HCT116 (cell line): ENCODE measurements at regions of chr10 and their contacts with region 1.

Region 1: DNA sequence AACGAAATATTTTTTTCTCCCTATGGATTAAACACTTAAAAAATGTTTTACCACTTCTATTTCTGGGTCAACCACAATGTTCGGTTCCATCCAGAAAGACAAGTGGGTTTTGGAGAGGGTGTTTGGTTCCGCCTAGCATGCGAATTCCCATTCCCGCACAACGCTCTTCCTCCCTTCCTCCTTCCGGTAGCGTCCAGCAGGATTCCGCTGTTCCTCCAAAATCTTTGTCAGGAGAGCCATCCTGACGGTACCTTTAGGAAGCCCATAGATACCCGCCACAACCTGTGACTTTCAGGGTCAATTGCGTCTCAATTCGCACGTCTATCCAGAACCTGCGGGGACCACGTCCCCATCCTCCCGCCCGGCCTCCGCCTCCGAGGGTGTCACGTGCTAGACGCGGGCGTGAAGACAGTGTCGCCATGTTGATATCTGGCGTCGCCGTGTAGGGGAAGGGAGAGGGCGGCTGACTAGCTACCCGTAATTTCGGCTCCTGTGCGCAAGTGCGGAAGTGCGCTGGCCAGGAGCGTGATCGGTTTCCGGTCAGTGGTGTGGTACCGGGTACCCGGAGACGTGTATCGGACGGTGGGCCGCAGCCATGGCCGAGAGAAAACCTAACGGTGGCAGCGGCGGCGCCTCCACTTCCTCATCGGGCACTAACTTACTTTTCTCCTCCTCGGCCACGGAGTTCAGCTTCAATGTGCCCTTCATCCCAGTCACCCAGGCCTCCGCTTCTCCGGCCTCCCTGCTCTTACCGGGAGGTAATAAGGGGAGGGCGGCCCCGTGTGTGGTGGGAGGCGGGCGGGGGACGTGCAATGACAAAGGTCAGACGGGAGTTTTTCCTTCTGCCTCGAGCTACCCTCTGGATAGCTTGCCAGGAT is at the start of gene SEC23IP:
- DNase-seq: peak; percentile 98
- ATAC-seq: peak; percentile 95
- H3K4me3 ChIP-seq: peak within 1 kb of the TSS; percentile 83 to 94
- H3K27ac ChIP-seq: peak within 1 kb of the TSS; percentile 54
- H3K4me1 ChIP-seq: peaks cover 7 to 18% of the 10 kb centered on the region in 2 experiments; a peak in 3 of 4 replicates
- H3K27me3 ChIP-seq: no peaks in the 10 kb centered on the region
- CTCF ChIP-seq: no peak
- POLR2A ChIP-seq: peak; percentile 98
- RAD21 ChIP-seq: no peak
- total RNA-seq, gene SEC23IP: 122 TPM

Region 2: DNA sequence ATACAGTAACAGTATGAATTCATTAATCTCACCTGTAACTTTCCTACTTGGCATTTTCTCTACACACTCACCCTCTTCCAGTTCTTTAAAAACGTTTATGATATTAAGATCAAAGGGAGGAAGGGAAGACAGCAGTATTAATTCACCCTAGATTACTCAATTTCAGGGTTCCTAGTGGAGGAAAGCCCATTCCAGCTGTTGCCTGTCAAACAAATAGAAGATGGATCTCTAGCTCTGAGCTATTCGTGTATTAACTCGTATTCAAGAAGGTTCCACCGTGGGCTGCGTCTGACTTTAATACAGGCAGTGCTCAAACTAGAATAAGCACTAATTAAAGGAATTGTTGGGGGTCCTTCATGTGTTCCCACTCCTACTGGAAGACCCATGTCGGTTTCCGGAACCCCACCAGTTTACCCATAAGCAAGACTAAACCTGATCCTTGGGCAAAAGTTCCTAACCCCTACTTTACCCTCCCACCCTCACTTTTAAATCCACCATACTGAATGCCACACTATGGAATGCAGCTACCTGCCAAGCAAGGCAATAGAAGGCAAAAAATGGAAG is 860.8 kb before region 1 on chr10:
- CTCF ChIA-PET with region 1: no interaction called
- POLR2A ChIA-PET with region 1: no interaction called
- RAD21 ChIA-PET with region 1: no interaction called
- intact Hi-C with region 1: no loop called
- DNase-seq: no peak
- ATAC-seq: no peak
- H3K4me3 ChIP-seq: no peak overlapping the region
- H3K27ac ChIP-seq: no peak overlapping the region; the same call in 1 of the 2 replicates
- H3K4me1 ChIP-seq: peaks cover 3 to 34% of the 10 kb centered on the region in 2 experiments; a peak in 3 of 4 replicates
- H3K27me3 ChIP-seq: no peaks in the 10 kb centered on the region
- CTCF ChIP-seq: no peak
- POLR2A ChIP-seq: no peak
- RAD21 ChIP-seq: no peak

Region 3: GRCh38 chr10:119872860-119873681 is 19.4 kb before region 1 on chr10:
- CTCF ChIA-PET with region 1: no interaction called
- POLR2A ChIA-PET with region 1: interaction called, 20 read pairs
- RAD21 ChIA-PET with region 1: no interaction called
- intact Hi-C with region 1: loop called (anchors 1 kb)
- DNase-seq: peak; percentile 84
- ATAC-seq: peak; percentile 93
- H3K4me3 ChIP-seq: peak overlapping the region; percentile 69 to 76
- H3K27ac ChIP-seq: peak overlapping the region; percentile 90
- H3K4me1 ChIP-seq: peaks cover 13 to 23% of the 10 kb centered on the region in 2 experiments
- H3K27me3 ChIP-seq: no peaks in the 10 kb centered on the region
- CTCF ChIP-seq: 0 out of 6 replicates have a peak, but pooled peaks of 1 of the 3 experiments have one; percentile 2
- POLR2A ChIP-seq: peak; percentile 56
- RAD21 ChIP-seq: no peak

Region 4: DNA sequence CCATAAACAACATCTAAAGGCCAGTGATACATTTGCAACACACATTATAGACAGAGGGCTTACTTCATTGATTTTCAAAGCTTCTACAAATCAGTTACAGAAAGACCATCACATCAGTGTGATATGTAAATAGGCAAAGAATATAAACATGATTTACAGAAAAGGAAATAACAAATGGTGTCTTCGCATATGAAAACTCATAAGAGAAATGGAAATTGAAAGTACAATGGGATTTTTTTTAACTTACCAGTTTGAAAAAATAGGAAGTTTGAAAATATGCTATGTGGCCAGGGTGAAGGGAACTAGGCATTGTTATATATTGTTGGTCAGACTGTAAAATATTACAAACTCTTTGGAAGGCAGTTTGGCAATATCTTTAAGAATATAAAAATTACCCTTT is 27.4 kb after region 1 on chr10:
- CTCF ChIA-PET with region 1: no interaction called
- POLR2A ChIA-PET with region 1: no interaction called
- RAD21 ChIA-PET with region 1: no interaction called
- intact Hi-C with region 1: no loop called
- DNase-seq: no peak
- ATAC-seq: no peak
- H3K4me3 ChIP-seq: no peak overlapping the region
- H3K27ac ChIP-seq: no peak overlapping the region
- H3K4me1 ChIP-seq: no peaks in the 10 kb centered on the region
- H3K27me3 ChIP-seq: no peaks in the 10 kb centered on the region
- CTCF ChIP-seq: no peak
- POLR2A ChIP-seq: no peak
- RAD21 ChIP-seq: no peak

Region 5: GRCh38 chr10:120300513-120300912 is 408.1 kb after region 1 on chr10:
- CTCF ChIA-PET with region 1: no interaction called
- POLR2A ChIA-PET with region 1: no interaction called
- RAD21 ChIA-PET with region 1: no interaction called
- intact Hi-C with region 1: no loop called
- DNase-seq: no peak
- ATAC-seq: no peak
- H3K4me3 ChIP-seq: no peak overlapping the region
- H3K27ac ChIP-seq: no peak overlapping the region
- H3K4me1 ChIP-seq: no peaks in the 10 kb centered on the region
- H3K27me3 ChIP-seq: peaks cover 32% of the 10 kb centered on the region
- CTCF ChIP-seq: no peak
- POLR2A ChIP-seq: no peak
- RAD21 ChIP-seq: no peak